H1 (cell line): ENCODE measurements at regions of chr1 and their contacts with region 1.

Region 1: DNA sequence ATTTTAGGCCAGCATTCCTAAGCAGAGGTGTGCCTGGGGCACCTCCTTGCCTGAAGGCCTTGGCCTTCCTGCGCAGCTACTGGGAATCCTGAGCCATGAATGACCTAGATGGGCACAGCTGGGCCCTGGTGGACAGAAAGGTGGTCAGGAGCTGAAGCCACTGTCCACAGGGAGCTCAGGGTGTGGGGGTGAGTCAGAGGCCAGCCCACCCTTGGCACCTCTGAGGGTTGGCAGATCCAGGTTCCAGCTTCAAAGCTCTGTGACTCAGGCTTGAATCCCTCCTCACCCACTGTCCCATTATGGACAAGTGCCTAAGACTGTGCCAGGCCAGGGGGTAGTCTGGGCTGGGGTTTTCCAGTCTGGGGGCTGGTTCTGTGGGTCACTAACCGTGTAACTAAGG is 6.4 kb upstream of the EDN2 start:
- DNase-seq: no peak
- H3K4me3 ChIP-seq: no peak overlapping the region
- H3K27ac ChIP-seq: no peak overlapping the region
- H3K4me1 ChIP-seq: peaks cover 8 to 33% (median 22%) of the 10 kb centered on the region in 4 experiments
- H3K27me3 ChIP-seq: peaks cover 0 to 4% (median 1%) of the 10 kb centered on the region in 4 experiments; a peak in 3 of 7 replicates
- CTCF ChIP-seq: no peak
- EP300 ChIP-seq: no peak
- POLR2A ChIP-seq: no peak
- RAD21 ChIP-seq: no peak

Region 2: DNA sequence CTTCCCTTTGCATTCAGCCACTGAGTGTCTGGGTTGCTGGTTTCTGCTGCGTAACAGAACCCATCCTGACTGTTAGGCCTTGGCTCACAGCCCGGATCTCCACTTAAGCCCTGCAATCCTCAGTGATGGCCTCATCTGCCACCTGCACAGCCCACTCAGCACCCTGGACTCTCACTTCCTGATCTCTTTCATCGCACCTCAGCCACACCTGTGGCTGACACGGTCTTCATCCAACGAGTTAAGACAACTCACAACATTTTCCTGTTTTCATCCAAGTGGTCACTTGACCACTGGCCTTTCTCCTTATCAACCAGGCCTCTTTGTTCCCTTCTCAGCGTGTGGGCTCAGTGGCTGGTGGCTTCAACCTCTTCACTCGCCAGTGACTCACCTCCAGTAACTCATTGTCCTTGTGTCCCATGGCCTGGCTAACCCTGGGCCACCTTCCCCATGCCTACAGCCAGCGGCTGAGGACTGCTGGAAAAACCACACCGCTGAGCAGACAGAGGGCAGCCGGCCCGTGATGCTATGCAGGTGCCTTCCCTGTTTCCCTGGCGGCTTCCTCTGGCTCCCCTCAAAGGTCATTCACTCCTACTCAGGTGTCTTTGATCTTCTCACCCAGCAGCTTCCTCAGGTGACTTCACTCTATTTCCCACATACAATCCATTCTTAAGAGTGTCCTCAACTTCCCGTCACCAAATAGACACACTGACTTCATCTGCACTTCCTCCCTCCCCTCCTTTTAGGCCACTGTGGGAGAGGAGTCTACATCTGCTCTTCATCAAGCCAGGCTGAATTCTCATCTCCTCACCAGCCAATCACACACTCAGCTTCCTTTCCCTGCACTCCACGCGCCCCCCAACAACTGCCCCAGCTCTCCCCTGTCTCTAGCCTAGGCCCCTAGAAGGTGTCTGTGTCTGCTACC is 13.5 kb after region 1 on chr1:
- CTCF ChIA-PET with region 1: interaction called, 30 read pairs
- POLR2A ChIA-PET with region 1: interaction called, 5 read pairs
- DNase-seq: no peak
- H3K4me3 ChIP-seq: no peak overlapping the region
- H3K27ac ChIP-seq: no peak overlapping the region
- H3K4me1 ChIP-seq: peaks cover 0 to 4% (median 0%) of the 10 kb centered on the region in 4 experiments; a peak in 2 of 7 replicates
- H3K27me3 ChIP-seq: no peaks in the 10 kb centered on the region
- CTCF ChIP-seq: no peak
- EP300 ChIP-seq: no peak
- POLR2A ChIP-seq: no peak
- RAD21 ChIP-seq: no peak

Region 3: DNA sequence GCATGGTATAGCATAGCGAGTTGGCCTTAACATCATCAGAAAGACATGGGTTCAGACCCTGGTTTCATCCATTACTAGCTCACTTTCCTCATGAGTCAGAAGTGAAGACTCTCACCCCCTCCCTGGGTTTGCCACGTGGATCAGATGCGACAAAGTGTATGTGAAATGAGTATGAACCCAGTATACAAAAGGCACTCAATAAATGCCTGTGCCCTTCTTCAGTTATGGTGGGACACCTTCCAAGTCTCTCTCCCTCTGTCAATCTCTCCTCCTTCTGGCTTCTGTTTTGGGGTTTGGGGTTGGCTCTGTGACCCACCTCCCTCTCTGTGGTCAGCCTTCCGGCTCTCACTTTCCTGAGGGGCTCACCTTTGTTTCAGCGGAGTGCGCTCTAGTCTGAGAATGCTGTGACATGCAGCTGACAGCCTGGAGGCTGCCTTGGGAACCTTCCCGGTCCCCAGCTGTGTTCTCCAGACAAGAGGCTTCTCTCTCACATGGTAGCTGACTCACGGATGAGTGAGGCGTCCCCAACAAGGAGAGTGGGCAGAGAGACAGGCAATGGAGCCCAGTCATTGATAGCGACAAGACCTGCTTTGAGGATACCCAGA is 148.5 kb after region 1 on chr1:
- CTCF ChIA-PET with region 1: no interaction called
- POLR2A ChIA-PET with region 1: no interaction called
- DNase-seq: no peak
- H3K4me3 ChIP-seq: no peak overlapping the region
- H3K27ac ChIP-seq: no peak overlapping the region
- H3K4me1 ChIP-seq: no peaks in the 10 kb centered on the region
- H3K27me3 ChIP-seq: no peaks in the 10 kb centered on the region
- CTCF ChIP-seq: no peak
- EP300 ChIP-seq: no peak
- POLR2A ChIP-seq: no peak
- RAD21 ChIP-seq: no peak

Region 4: DNA sequence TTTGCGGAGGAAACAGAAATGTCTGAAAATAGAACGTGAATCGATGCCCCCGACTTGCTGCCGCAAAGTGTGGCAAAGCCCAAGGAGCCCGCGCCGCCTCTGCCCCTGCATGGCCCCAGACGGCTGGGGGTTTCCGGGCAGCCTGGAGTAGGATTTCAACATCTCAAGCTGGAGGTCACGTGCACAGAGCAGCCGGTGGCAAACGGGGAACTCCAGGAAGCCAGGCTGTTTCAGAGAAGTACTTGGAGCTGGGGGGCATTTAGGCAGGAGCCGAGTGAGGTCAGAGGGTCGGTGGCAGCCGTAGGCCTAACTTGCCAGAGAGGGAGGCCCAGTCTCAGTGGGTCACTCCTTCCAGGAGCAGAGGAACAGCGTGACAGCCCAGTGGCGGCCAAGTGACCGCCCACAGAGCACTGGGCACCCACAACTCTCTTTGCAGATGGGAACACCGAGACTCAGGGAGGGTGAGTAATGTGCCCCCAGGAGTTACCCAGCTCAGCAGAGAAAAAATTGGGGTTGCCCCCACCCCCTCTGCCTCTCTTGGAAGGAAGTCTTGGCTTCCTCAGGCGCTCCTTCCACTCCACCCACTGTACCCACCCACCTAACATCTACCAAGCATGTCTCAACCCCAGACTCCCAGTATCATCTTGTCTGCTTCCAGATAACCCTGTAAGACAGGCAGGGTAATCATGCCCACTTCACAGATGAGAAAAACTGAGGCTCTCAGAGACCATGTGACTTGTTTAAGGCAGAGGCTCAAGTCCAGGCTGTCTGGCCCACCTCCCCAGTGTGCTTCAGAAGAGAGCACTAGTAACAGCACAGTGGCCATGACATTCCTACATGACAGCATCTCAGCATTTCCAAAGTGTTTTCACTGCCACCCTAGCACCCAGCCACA is 248.4 kb after region 1 on chr1:
- CTCF ChIA-PET with region 1: no interaction called
- POLR2A ChIA-PET with region 1: no interaction called
- DNase-seq: no peak
- H3K4me3 ChIP-seq: no peak overlapping the region
- H3K27ac ChIP-seq: no peak overlapping the region
- H3K4me1 ChIP-seq: peaks cover 0 to 3% (median 0%) of the 10 kb centered on the region in 4 experiments; a peak in 2 of 7 replicates
- H3K27me3 ChIP-seq: peaks cover 0 to 2% (median 0%) of the 10 kb centered on the region in 4 experiments; a peak in 1 of 7 replicates
- CTCF ChIP-seq: no peak
- EP300 ChIP-seq: no peak
- POLR2A ChIP-seq: no peak
- RAD21 ChIP-seq: no peak

Region 5: DNA sequence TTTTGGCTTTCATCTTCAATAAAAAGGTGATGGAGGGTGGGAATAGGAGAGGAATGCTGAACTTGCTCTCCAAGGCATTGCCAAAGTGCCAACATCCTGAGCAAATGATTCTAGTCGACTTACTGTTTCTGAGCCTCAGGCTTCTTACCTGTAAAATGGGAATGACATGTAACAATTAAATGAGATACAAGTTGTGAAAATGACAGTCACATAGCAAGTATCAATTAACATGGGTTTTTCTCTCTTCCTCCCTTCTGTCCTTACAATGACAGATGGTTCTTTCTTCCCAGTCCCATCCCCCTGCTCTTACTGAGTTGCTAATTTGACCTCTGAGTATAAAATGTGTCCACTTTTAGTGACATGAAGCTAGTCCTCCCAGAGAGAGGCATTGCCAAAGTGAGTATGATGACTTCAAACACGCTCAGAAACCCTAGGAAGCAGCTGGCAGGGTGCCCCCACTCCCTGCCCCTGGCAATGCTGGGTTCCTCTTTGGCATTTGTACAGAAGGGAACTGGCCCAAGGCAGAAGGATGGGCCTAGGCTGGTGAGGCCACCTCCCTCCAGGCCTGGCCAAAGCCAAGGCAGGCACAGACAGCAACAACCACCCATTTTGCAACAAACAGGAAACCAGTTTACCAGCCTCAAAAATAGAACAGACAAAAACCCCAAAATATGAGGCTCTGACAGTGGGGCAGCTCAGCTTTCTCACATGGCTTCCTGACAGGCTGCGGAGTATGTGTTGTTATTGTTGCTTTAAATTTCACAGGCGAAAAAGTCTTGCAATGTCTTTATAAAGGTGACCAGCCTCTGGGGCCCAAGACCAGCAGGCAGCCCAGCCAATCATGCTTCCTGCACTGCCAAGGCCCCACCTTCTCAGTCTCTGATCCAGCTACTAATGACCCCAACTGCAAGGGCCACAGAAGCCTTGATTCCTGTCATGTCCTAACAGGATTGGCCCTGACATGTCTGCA is 311.9 kb after region 1 on chr1:
- CTCF ChIA-PET with region 1: no interaction called
- POLR2A ChIA-PET with region 1: no interaction called
- DNase-seq: no peak
- H3K4me3 ChIP-seq: no peak overlapping the region
- H3K27ac ChIP-seq: no peak overlapping the region
- H3K4me1 ChIP-seq: peaks cover 0 to 4% (median 1%) of the 10 kb centered on the region in 4 experiments; a peak in 3 of 7 replicates
- H3K27me3 ChIP-seq: no peaks in the 10 kb centered on the region
- CTCF ChIP-seq: no peak
- EP300 ChIP-seq: no peak
- POLR2A ChIP-seq: no peak
- RAD21 ChIP-seq: no peak